ENCODE measurements at regions of chr2 and their contacts with region 1.

Region 1: GRCh38 chr2:55961318-55961911 is 37.8 kb upstream of the EFEMP1 start:
- DNase-seq: no peak
- ATAC-seq: peak; percentile 65
- H3K4me3 Mint-ChIP-seq: no peak overlapping the region
- H3K27ac Mint-ChIP-seq: no peak overlapping the region
- H3K4me1 Mint-ChIP-seq: no peaks in the 10 kb centered on the region
- H3K27me3 Mint-ChIP-seq: no peaks in the 10 kb centered on the region
- CTCF ChIP-seq: 0 out of 2 replicates have a peak, but pooled peaks have one; percentile 24

Region 2: DNA sequence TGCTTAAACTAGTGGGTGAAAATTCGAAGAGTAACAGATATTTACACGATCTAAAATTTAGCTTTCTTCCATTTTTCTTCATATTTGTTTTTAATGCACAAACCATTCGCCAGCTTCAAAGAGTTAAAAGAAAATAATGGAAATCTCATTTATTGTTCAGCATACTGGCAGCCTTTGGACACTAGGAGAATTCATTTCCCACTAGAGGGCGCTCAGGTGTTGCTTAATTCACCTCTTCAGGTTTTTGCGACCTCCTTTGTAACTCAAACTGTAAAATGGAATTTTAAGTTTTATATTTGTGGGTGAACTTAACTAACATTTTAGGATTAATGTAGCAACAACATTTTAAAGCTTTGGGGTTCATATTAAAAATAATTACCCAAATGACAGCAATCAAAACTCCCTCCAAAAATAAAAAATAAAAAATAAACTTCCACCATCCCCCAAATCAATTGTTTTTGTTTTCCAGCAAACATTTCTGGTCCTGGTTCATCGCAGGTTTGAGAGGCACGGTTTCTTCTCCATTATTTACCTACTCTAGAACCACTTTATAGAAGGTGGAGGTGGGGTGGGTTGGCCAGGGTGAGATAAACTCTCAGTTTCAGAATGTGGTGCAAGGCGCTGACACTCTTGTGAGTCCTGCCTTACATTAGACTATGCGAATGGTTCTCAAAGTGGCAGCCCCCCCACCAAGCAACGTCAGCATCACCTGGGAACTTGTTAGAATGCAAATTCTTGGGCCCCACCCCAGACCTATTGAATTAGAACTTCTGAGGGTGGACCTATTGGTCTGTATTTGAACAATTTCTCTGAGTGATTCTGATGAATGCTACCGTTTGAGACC is 243.0 kb before region 1 on chr2:
- CTCF ChIA-PET with region 1: interaction called, 16 read pairs
- POLR2A ChIA-PET with region 1: no interaction called
- DNase-seq: peak; percentile 54
- ATAC-seq: peak; percentile 62
- H3K4me3 Mint-ChIP-seq: no peak overlapping the region
- H3K27ac Mint-ChIP-seq: no peak overlapping the region
- H3K4me1 Mint-ChIP-seq: peaks cover 22% of the 10 kb centered on the region
- H3K27me3 Mint-ChIP-seq: no peaks in the 10 kb centered on the region
- CTCF ChIP-seq: peak; percentile 53

Region 3: GRCh38 chr2:55771612-55772011 is 189.8 kb before region 1 on chr2:
- CTCF ChIA-PET with region 1: interaction called, 47 read pairs
- POLR2A ChIA-PET with region 1: interaction called, 3 read pairs
- DNase-seq: no peak
- ATAC-seq: no peak
- H3K4me3 Mint-ChIP-seq: no peak overlapping the region
- H3K27ac Mint-ChIP-seq: no peak overlapping the region
- H3K4me1 Mint-ChIP-seq: no peaks in the 10 kb centered on the region
- H3K27me3 Mint-ChIP-seq: no peaks in the 10 kb centered on the region; the same call in 1 of the 2 replicates
- CTCF ChIP-seq: no peak